Lower leg skin (tissue), 4 donors: ENCODE measurements at regions of chr3 and their contacts with region 1.

Region 1: GRCh38 chr3:140910860-140911259 is 30.8 kb upstream of the SLC25A36 start:
- DNase-seq: peak in 1 of 2 donors; percentile 59
- H3K4me3 ChIP-seq: no peak overlapping the region
- CTCF ChIP-seq: no peak
- POLR2A ChIP-seq: no peak

Region 2: DNA sequence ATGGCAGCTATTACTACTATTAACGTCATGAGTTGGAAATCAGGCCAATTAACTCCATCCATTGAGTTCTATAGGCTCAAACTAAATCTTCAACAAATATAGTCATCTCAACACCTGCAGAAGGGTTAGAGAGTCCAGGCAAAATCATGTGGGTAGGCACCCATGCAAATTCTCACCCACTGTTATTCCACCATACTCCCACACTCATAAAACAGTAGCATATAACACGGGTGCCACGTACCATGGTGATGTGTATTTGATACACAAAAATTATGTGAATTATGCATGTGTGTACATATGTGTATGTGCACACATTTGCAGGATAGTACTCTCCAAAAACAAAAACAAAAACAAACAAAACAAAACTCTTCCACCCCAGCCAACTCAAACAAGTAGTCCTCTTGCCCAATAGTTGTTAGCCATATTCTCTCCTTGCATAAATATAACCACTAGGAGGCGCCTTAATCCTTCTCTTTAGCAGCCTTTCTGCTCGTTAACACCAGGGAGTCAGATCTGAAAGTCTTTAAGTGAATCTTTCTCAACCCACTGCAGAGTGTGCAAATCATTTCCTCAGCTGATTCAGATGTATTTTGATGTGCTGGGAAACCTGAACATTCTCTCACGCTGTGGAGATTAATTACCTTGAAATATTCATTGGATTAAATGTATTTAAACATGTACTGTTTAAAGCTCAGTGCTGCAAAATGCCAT is 1483.4 kb before region 1 on chr3:
- intact Hi-C with region 1: no loop called
- DNase-seq: peak in 1 of 2 donors; percentile 46
- H3K4me3 ChIP-seq: no peak overlapping the region
- CTCF ChIP-seq: no peak
- POLR2A ChIP-seq: no peak

Region 3: GRCh38 chr3:140898340-140899180 is 12.3 kb before region 1 on chr3:
- intact Hi-C with region 1: loop called (anchors 1 kb)
- DNase-seq: peak in 1 of 2 donors; percentile 14
- H3K4me3 ChIP-seq: no peak overlapping the region
- CTCF ChIP-seq: peak in 1 of 3 donors; percentile 28
- POLR2A ChIP-seq: no peak

Region 4: GRCh38 chr3:141011232-141011996 is 100.6 kb after region 1 on chr3:
- intact Hi-C with region 1: no loop called
- DNase-seq: peak; percentile 44 to 95
- H3K4me3 ChIP-seq: no peak overlapping the region
- CTCF ChIP-seq: no peak
- POLR2A ChIP-seq: no peak

Region 5: DNA sequence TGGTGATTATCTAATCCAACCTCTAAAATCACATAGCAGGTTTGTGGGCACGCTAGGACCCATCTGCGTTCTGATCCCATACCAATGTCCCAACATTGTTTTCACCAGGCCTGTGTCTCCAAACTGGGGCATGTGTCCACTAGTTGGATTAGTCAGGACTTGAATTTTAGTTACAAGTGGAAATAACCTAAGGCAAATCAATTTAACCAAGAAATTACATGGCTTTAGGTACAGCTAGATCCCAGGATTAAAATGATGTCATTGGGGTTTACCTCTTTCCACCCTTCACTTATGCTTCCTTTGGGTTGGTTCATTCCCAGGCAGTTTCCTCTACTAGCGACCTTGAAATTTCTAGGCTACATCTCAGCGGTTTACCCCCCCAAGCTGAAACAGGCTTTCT is 273.6 kb after region 1 on chr3:
- intact Hi-C with region 1: loop called (anchors 10 kb)
- DNase-seq: no peak
- H3K4me3 ChIP-seq: no peak overlapping the region
- CTCF ChIP-seq: no peak
- POLR2A ChIP-seq: no peak